Astrocyte of the cerebellum (primary cell): ENCODE measurements at regions of chr9 and their contacts with region 1.

Region 1: DNA sequence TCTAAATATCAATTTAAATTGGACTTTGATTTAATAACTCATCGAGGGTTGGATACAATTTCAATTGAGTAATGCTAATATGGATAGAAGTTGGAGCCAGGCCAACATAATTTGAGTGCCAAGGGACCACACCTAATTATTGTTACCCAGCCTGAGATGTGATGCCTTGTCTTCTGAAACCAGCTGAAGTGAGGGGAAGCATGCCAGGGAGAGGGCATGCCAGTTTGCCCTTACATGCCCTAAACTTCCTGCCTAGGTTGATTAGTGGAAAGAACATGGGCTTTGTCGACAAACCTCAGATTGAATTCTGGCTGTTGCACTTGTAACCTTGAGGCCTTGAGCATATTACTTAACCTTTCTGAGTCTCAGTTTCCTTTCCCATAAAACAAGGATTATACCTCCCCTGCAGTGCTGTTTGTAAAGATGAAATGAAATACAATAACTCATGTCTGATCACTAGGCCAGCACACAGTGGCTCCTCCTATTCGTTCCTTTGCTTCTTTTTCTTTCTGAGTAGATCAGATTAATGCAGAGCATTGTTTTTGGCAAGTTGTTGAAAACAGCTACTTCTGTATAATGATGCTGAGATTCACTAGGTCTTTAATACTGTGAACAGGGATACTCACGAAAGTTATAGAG is 412.8 kb downstream of the TLE4 start:
- DNase-seq: no peak
- H3K4me3 ChIP-seq: no peak overlapping the region
- CTCF ChIP-seq: no peak

Region 2: GRCh38 chr9:80082213-80082612 is 97.7 kb after region 1 on chr9:
- in situ Hi-C with region 1: loop called (anchors 5 kb)
- DNase-seq: no peak
- H3K4me3 ChIP-seq: no peak overlapping the region
- CTCF ChIP-seq: no peak